ENCODE measurements at regions of chr13 and their contacts with region 1.

Region 1: DNA sequence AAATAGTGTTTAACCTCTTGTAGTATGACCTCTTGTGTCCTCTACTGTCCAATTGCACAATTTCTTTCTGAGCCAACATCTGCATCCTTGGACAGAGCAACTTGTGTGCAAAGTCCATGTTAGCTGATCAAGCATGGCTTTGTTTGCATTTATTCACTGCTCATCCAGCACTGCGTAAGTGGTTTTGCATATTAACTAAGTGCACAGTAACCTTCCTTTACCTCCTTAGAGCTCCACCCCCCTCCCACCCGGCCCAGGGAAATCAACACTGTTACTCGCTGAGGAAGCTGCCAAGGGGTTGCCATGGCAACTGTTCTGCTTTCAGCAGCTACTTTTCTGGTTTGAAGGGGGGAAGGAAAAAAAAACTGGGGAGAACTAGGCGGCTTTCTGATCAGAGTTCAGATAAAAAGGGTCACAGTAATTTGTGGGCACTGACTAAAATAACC is 153.5 kb upstream of the KLF12 start:
- DNase-seq: peak; percentile 87
- ATAC-seq: peak; percentile 73
- H3K4me3 Mint-ChIP-seq: peak overlapping the region; percentile 60
- H3K27ac Mint-ChIP-seq: peak overlapping the region; percentile 78
- H3K4me1 Mint-ChIP-seq: peaks cover 43% of the 10 kb centered on the region
- H3K27me3 Mint-ChIP-seq: no peaks in the 10 kb centered on the region

Region 2: GRCh38 chr13:73835138-73835721 is 452.5 kb before region 1 on chr13:
- CTCF ChIA-PET with region 1: interaction called, 42 read pairs
- POLR2A ChIA-PET with region 1: no interaction called
- DNase-seq: no peak
- ATAC-seq: no peak
- H3K4me3 Mint-ChIP-seq: no peak overlapping the region
- H3K27ac Mint-ChIP-seq: no peak overlapping the region
- H3K4me1 Mint-ChIP-seq: peaks cover 8% of the 10 kb centered on the region
- H3K27me3 Mint-ChIP-seq: no peaks in the 10 kb centered on the region

Region 3: GRCh38 chr13:74062933-74063332 is 224.8 kb before region 1 on chr13:
- CTCF ChIA-PET with region 1: interaction called, 29 read pairs
- POLR2A ChIA-PET with region 1: interaction called, 7 read pairs
- DNase-seq: peak; percentile 33
- ATAC-seq: peak; percentile 50
- H3K4me3 Mint-ChIP-seq: peak overlapping the region; percentile 65
- H3K27ac Mint-ChIP-seq: peak overlapping the region; percentile 90
- H3K4me1 Mint-ChIP-seq: peaks cover 81% of the 10 kb centered on the region
- H3K27me3 Mint-ChIP-seq: no peaks in the 10 kb centered on the region

Region 4: GRCh38 chr13:74145249-74145975 is 142.3 kb before region 1 on chr13:
- CTCF ChIA-PET with region 1: interaction called, 134 read pairs
- POLR2A ChIA-PET with region 1: no interaction called
- DNase-seq: no peak
- ATAC-seq: no peak
- H3K4me3 Mint-ChIP-seq: no peak overlapping the region
- H3K27ac Mint-ChIP-seq: no peak overlapping the region
- H3K4me1 Mint-ChIP-seq: no peaks in the 10 kb centered on the region
- H3K27me3 Mint-ChIP-seq: peaks cover 4% of the 10 kb centered on the region

Region 5: GRCh38 chr13:74191410-74191809 is 96.3 kb before region 1 on chr13:
- CTCF ChIA-PET with region 1: interaction called, 19 read pairs
- POLR2A ChIA-PET with region 1: no interaction called
- DNase-seq: no peak
- ATAC-seq: no peak
- H3K4me3 Mint-ChIP-seq: no peak overlapping the region
- H3K27ac Mint-ChIP-seq: no peak overlapping the region
- H3K4me1 Mint-ChIP-seq: peaks cover 19% of the 10 kb centered on the region
- H3K27me3 Mint-ChIP-seq: no peaks in the 10 kb centered on the region

Region 6: DNA sequence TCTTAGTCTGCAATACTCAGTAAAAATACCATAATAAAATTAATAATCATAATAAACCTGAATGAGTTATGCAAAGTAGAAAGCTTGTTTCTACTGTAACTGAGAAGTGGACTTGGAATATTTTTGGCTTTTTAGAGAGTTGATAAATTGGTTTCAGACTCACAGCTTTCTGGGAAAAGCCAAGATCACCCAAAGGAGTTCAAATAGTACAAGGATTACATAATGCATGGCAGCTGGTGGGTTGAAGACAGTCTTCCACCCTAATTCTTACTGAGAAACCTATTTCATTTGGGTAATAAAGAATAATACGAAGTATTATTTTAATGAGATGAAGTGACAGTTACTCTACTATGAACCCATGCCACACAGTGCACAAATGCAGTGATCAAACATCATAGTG is 14.2 kb before region 1 on chr13:
- CTCF ChIA-PET with region 1: interaction called, 19 read pairs
- POLR2A ChIA-PET with region 1: no interaction called
- DNase-seq: no peak
- ATAC-seq: no peak
- H3K4me3 Mint-ChIP-seq: no peak overlapping the region
- H3K27ac Mint-ChIP-seq: no peak overlapping the region
- H3K4me1 Mint-ChIP-seq: peaks cover 3% of the 10 kb centered on the region
- H3K27me3 Mint-ChIP-seq: peaks cover 2% of the 10 kb centered on the region

Measured in activated CD8-positive, alpha-beta T cell treated with anti-CD3 and anti-CD28 coated beads, Interleukin-2, amount 10 ng/mL, durations not matched to agents 7 days and 5 days (primary cell).